ENCODE measurements at regions of chr2 and their contacts with region 1.

Region 1: GRCh38 chr2:84925724-84926376 is 20.4 kb downstream of the TMSB10 start:
- DNase-seq: peak; percentile 95 to 100 (median 98)
- ATAC-seq: peak; percentile 86 to 96 (median 92)
- H3K4me3 ChIP-seq: peak overlapping the region in 3 of 4 donors; percentile 15 to 45 (median 35)
- H3K27ac ChIP-seq: no peak overlapping the region
- H3K4me1 ChIP-seq: peaks cover 0 to 4% (median 0%) of the 10 kb centered on the region in 3 donors
- H3K27me3 ChIP-seq: no peaks in the 10 kb centered on the region
- CTCF ChIP-seq: peak; percentile 96 to 100 (median 99)

Region 2: DNA sequence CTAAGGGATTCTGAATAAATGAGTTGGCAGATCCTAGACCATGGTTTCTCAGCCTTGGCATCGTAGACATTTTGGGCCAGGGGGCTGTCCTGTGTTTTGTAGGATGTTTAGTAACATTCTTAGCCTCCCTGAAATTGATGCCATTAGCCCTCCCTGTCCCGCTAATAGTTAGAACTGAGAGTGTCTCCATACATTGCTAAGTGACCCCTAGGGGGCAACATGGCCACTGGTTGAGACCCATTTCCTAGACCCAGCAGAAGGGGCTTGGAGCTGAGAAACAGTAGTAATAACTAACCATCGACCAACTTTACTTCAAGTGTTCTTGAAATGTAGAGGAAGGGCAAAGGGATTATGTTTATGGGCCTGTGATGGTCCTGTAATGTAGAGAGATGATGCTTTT is 85.9 kb after region 1 on chr2:
- intact Hi-C with region 1: loop called in 1 of 3 experiments (anchors 5 kb)
- DNase-seq: no peak
- ATAC-seq: no peak
- H3K4me3 ChIP-seq: no peak overlapping the region
- H3K27ac ChIP-seq: no peak overlapping the region
- H3K4me1 ChIP-seq: peaks cover 3 to 25% (median 12%) of the 10 kb centered on the region in 3 donors
- H3K27me3 ChIP-seq: no peaks in the 10 kb centered on the region
- CTCF ChIP-seq: no peak

Region 3: GRCh38 chr2:85648619-85649018 is 722.8 kb after region 1 on chr2:
- intact Hi-C with region 1: no loop called
- DNase-seq: no peak
- ATAC-seq: peak in 1 of 4 donors; percentile 27
- H3K4me3 ChIP-seq: no peak overlapping the region
- H3K27ac ChIP-seq: no peak overlapping the region
- H3K4me1 ChIP-seq: no peaks in the 10 kb centered on the region
- H3K27me3 ChIP-seq: no peaks in the 10 kb centered on the region
- CTCF ChIP-seq: no peak

Measured in pancreas (tissue), 10 donors.